BJ (cell line): ENCODE measurements at regions of chr19 and their contacts with region 1.

Region 1: GRCh38 chr19:734716-735115 is 16.2 kb upstream of the MISP start:
- DNase-seq: no peak
- H3K4me3 ChIP-seq: no peak overlapping the region
- H3K27me3 ChIP-seq: no peaks in the 10 kb centered on the region
- CTCF ChIP-seq: no peak

Region 2: GRCh38 chr19:662962-663681 is 71.6 kb before region 1 on chr19 and contains the start of gene RNF126:
- CTCF ChIA-PET with region 1: interaction called, 20 read pairs
- POLR2A ChIA-PET with region 1: no interaction called
- DNase-seq: no peak
- H3K4me3 ChIP-seq: peak within 1 kb of the TSS; percentile 95
- H3K27me3 ChIP-seq: no peaks in the 10 kb centered on the region
- CTCF ChIP-seq: no peak
- polyA plus RNA-seq, gene RNF126: 2.7 and 2.9 TPM in 2 replicates

Region 3: DNA sequence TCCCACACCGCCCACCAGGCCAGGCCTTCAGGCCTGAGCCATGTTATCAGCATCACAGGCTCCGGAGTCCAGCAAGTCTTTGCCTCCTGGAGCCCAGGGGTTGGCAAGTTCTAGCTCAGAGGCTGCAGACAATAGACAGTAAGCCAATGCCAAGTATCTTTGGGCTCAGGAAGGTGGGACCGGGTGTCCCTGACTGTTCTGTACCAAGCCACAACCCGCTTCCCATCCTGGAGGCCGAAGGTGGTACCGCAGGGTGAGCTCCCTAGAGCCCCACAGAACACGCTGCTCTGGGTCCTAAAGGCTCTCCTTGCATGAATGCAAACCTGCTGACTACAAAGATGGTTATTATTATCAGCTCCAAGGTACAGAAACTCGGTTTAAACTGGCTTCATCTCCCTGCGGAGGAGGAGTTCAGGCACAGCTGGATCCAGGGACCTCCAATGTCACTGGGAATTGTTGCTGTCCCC is 64.1 kb before region 1 on chr19:
- CTCF ChIA-PET with region 1: interaction called, 17 read pairs
- POLR2A ChIA-PET with region 1: no interaction called
- DNase-seq: no peak
- H3K4me3 ChIP-seq: no peak overlapping the region
- H3K27me3 ChIP-seq: no peaks in the 10 kb centered on the region
- CTCF ChIP-seq: no peak

Region 4: GRCh38 chr19:677201-677600 is 57.5 kb before region 1 on chr19:
- CTCF ChIA-PET with region 1: interaction called, 11 read pairs
- POLR2A ChIA-PET with region 1: no interaction called
- DNase-seq: no peak
- H3K4me3 ChIP-seq: peak overlapping the region; percentile 74
- H3K27me3 ChIP-seq: no peaks in the 10 kb centered on the region
- CTCF ChIP-seq: no peak

Region 5: DNA sequence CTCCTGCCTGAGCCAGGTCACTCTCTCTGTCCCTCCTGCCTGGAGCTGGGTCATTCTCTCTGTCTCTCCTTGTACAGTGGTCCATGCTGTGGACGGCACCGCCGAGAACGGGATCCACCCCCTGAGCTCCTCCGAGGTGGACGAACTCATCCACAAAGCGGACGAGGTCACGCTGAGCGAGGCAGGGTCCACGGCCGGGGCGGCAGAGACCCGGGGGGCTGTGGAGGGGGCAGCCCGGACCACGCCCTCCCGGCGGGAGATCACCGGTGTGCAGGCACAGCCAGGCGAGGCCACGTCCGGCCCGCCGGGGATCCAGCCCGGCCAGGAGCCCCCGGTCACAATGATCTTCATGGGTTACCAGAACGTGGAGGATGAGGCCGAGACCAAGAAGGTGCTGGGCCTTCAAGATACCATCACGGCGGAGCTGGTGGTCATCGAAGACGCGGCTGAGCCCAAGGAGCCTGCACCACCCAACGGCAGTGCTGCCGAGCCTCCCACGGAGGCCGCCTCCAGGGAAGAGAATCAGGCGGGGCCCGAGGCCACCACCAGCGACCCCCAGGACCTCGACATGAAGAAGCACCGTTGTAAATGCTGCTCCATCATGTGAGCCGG is 11.6 kb after region 1 on chr19:
- CTCF ChIA-PET with region 1: interaction called, 17 read pairs
- POLR2A ChIA-PET with region 1: no interaction called
- DNase-seq: no peak
- H3K4me3 ChIP-seq: no peak overlapping the region
- H3K27me3 ChIP-seq: no peaks in the 10 kb centered on the region
- CTCF ChIP-seq: no peak

Region 6: GRCh38 chr19:913080-913748 is 178.5 kb after region 1 on chr19 and contains the start of gene R3HDM4:
- CTCF ChIA-PET with region 1: no interaction called
- POLR2A ChIA-PET with region 1: no interaction called
- DNase-seq: no peak
- H3K4me3 ChIP-seq: peak within 1 kb of the TSS; percentile 94
- H3K27me3 ChIP-seq: peaks cover 9% of the 10 kb centered on the region
- CTCF ChIP-seq: no peak
- polyA plus RNA-seq, gene R3HDM4: 35.3 and 46.6 TPM in 2 replicates